ENCODE measurements at regions of chr6 and their contacts with region 1.

Region 1: DNA sequence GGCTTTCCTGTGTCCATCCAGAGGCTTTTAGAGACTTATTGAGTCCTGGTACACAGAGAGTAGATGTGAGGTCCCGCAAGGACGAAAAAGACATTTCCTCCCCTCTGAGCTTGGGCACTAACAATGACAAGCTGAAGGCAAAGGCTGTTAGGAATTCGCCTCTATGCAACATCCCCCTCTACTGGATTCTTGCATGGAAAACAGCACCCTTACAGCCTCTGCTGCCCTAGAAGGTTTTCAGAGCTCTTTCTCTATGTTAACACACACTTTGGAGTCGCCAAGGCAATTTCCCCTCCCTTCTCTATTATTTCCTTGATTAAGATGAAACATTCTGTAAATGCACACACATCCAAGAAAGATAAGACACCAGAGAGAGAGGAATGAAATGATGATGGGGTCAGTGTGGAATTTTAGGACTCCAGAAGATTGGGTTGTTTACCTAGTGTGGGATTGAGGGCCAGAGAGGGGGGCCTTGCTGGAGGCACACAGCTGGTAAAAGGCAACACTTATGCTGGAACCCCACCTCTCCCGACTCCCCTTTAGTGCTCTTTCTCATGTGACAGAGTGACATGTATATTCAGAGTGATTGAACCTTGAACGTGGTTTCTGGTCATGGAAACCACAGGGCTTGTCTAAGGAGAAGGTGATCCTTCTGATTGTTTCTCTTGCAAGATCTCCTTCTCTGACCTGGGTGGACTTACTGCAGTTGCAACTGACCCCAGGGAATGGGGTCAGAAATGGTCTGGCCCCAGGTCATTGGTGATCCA is 300.7 kb downstream of the CLIC5 start:
- H3K4me3 Mint-ChIP-seq: no peak overlapping the region
- H3K27ac Mint-ChIP-seq: peak overlapping the region; percentile 58
- H3K4me1 Mint-ChIP-seq: peaks cover 30% of the 10 kb centered on the region
- H3K27me3 Mint-ChIP-seq: no peaks in the 10 kb centered on the region

Region 2: DNA sequence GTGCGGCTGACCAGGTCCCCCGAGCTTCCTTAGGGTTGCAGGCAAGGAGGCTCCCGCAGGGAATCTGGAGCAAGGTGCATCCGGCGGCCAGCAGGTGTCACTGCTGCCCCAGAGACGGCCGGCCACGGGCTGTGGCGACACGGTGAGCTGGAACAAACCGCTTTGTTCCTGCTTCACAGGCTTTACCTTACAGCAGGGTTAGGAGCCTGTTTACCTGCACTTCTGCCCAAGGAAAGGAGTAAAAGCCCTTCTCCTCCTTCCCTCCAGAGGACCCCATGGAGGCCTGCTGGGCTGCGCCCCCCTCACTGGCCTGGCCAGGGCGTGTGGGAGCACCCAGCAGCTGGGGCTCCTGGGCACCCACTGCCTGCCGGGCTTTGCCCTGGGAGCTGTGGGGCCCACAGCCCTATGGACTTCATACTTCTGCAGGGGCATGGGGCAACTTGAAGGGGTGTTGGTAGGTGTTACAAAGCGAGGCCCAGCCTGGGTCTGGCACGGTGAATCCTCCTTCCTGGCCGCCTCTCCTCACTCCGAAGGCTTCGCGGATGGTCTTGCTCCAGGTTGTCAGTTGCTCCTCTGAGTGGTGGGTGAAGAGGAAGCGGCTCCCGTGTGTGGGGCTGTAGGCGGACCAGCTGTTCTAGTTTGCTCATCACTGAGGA is 1239.0 kb before region 1 on chr6:
- intact Hi-C with region 1: loop called (anchors 5 kb)
- H3K4me3 Mint-ChIP-seq: no peak overlapping the region
- H3K27ac Mint-ChIP-seq: no peak overlapping the region
- H3K4me1 Mint-ChIP-seq: peaks cover 26% of the 10 kb centered on the region
- H3K27me3 Mint-ChIP-seq: peaks cover 18% of the 10 kb centered on the region

Region 3: DNA sequence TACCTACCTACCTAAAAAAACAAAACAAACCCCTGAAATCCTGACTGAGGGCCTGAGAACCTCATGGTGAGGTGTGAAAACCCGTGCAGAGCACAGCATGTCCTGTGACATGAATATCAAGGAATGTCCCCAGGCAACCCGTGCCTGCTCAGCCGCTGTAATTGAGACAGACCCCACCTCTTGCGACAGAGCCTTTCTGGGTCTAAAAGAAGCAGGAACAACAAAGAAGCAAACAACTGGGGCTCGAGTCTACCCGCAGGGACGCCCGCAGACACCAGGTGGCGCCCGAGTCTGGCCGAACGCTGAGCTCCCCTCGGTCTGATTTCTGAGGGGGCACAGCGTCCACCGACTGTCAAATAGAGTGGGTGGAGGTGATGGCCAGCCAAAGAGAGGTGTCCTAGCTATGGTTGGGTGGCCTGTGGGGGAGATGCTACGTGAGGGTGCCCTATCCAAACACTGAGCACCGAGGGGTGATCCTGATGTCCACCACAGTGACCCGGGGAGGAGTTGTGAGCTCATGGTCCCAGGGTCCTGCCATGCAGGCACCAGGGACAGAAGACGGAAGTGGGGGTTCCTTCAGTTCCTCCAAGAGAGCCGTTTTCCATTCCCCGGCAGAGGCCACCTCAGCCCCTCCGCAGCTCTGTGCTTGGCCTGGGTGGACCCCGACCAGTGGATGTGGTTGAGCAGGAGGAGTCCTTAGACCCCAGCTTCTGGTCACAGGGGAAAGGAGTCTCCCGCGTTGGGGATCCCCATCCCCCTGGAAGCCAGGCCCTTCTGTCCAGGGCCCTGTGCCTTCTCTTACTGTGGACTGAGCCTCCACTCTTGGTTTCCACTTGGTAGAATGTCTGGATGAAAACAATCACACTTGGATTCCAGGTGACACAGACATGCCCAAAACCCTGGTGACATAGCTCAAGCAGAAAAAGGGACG is 1059.2 kb before region 1 on chr6:
- intact Hi-C with region 1: loop called (anchors 2 kb)
- H3K4me3 Mint-ChIP-seq: no peak overlapping the region
- H3K27ac Mint-ChIP-seq: peak overlapping the region; percentile 37
- H3K4me1 Mint-ChIP-seq: peaks cover 30% of the 10 kb centered on the region
- H3K27me3 Mint-ChIP-seq: peaks cover 20% of the 10 kb centered on the region

Region 4: DNA sequence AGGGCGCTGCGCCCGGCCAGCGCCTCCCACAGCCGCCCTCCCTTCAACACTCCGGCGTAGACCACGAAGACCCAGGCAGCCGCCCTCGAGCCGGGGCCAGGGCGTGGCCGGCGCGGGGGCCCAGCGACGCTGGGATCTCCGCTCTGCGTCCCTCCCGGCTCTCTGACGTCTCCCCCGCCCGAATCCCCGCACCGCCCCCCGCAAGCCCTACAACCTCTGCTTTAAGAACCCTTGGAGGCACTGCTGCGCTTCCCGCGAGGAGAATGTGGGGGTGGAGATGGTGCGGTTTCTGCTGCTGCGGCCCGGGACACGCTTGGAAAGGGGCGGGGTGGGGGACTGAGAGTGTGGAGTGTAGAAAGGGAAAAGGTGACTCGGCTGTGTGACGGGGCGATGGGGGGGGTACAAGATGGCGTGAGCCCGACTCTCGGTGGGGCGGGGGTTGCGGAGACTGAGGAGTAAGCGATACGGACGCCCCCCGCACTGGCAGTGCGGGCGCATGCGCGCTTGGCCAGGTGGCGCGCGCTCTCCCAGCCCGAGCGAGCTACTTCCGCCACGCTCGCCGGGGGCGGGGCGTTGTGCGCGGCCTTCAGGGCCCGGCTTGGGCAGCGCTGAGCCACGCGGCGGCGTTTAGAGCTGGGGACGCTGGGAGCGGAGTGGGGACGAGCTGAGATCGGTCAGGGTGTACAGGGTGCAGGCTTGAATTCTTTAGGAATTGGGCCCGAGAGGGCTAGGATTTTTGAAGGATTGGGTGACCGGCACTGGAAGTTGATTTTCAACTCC is 337.2 kb before region 1 on chr6 and contains the start of gene SUPT3H:
- intact Hi-C with region 1: loop called (anchors 5 kb)
- H3K4me3 Mint-ChIP-seq: peak within 1 kb of the TSS; percentile 95
- H3K27ac Mint-ChIP-seq: peak within 1 kb of the TSS; percentile 99
- H3K4me1 Mint-ChIP-seq: peaks cover 23% of the 10 kb centered on the region
- H3K27me3 Mint-ChIP-seq: no peaks in the 10 kb centered on the region

Measured in dendritic cell treated with granulocyte-macrophage colony-stimulating factor and Interleukin-4, amounts not matched to agents 40 ng/mL and 50 ng/mL, for 4 days (primary cell).